ENCODE measurements at regions of chr12 and their contacts with region 1.

Region 1: GRCh38 chr12:98644711-98645402 is at the starts of genes APAF1 and IKBIP:
- DNase-seq: peak; percentile 99
- ATAC-seq: peak; percentile 87
- H3K4me3 Mint-ChIP-seq: peak within 1 kb of the TSS; percentile 97
- H3K27ac Mint-ChIP-seq: peak within 1 kb of the TSS; percentile 95
- H3K4me1 Mint-ChIP-seq: peaks cover 19% of the 10 kb centered on the region
- H3K27me3 Mint-ChIP-seq: no peaks in the 10 kb centered on the region
- CTCF ChIP-seq: no peak
- total RNA-seq, gene APAF1: 21.7 and 24.0 TPM in 2 replicates
- total RNA-seq, gene IKBIP: 8.9 and 9.1 TPM in 2 replicates

Region 2: GRCh38 chr12:96906849-96907670 is 1737.8 kb before region 1 on chr12 and contains the start of gene NEDD1:
- CTCF ChIA-PET with region 1: no interaction called
- POLR2A ChIA-PET with region 1: no interaction called
- intact Hi-C with region 1: loop called (anchors 2 kb)
- DNase-seq: peak; percentile 85
- ATAC-seq: peak; percentile 85
- H3K4me3 Mint-ChIP-seq: peak within 1 kb of the TSS; percentile 95
- H3K27ac Mint-ChIP-seq: peak within 1 kb of the TSS; percentile 91
- H3K4me1 Mint-ChIP-seq: peaks cover 41% of the 10 kb centered on the region
- H3K27me3 Mint-ChIP-seq: peaks cover 2% of the 10 kb centered on the region
- CTCF ChIP-seq: no peak
- total RNA-seq, gene NEDD1: 15.0 and 16.3 TPM in 2 replicates

Region 3: GRCh38 chr12:98516184-98516873 is 128.5 kb before region 1 on chr12:
- CTCF ChIA-PET with region 1: interaction called, 3 read pairs
- POLR2A ChIA-PET with region 1: interaction called, 29 read pairs
- intact Hi-C with region 1: loop called (anchors 1 kb)
- DNase-seq: peak; percentile 71
- ATAC-seq: peak; percentile 63
- H3K4me3 Mint-ChIP-seq: peak overlapping the region; percentile 98
- H3K27ac Mint-ChIP-seq: peak overlapping the region; percentile 97
- H3K4me1 Mint-ChIP-seq: peaks cover 61% of the 10 kb centered on the region
- H3K27me3 Mint-ChIP-seq: no peaks in the 10 kb centered on the region
- CTCF ChIP-seq: no peak

Region 4: DNA sequence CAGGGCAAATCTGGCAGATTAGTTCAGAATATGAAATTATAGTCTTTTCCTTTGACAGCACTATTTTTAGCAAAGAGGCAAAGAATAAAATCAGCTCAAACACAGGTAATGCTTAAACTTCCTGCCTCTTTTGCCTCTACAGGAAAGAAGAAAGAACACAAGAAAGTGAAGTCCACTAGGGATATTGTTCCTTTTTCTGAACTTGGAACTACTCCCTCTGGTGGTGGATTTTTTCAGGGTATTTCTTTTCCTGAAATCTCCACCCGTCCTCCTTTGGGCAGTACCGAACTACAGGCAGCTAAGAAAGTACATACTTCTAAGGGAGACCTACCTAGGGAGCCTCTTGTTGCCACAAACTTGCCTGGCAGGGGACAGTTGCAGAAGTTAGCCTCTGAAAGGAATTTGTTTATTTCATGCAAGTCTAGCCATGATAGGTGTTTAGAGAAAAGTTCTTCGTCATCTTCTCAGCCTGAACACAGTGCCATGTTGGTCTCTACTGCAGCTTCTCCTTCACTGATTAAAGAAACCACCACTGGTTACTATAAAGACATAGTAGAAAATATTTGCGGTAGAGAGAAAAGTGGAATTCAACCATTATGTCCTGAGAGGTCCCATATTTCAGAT is 112.1 kb before region 1 on chr12:
- CTCF ChIA-PET with region 1: no interaction called
- POLR2A ChIA-PET with region 1: no interaction called
- intact Hi-C with region 1: no loop called
- DNase-seq: no peak
- ATAC-seq: peak; percentile 37
- H3K4me3 Mint-ChIP-seq: no peak overlapping the region
- H3K27ac Mint-ChIP-seq: no peak overlapping the region
- H3K4me1 Mint-ChIP-seq: peaks cover under 1% of the 10 kb centered on the region
- H3K27me3 Mint-ChIP-seq: no peaks in the 10 kb centered on the region
- CTCF ChIP-seq: no peak

Region 5: DNA sequence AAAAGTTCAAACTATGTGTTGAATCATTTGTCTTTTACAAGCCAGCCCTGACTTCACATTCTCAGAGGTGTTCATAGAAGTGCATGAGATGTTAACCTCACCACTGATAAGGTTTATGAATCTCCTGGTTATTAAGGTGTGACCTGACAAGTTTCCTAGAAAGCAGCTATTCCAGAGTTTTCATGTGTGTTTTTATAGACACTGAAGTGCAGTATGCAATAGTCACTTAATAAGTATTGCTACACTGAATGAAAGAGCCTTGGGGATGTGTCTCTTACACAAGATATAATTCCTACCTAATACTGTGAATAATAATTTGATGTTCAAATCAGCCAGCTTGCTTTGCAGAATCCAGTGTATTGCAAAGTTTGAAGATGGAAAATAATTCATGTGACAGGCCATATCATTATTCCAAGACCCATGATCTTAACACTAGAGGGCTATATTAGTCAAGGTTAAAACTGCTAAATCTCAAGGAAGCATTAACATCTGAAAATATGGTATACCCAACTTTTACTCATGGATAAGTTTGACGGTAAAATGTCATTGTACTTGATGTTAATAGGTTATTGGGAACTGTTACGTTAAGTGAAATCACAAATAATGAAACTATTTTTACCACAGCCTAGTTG is 38.4 kb before region 1 on chr12:
- CTCF ChIA-PET with region 1: interaction called, 4 read pairs
- POLR2A ChIA-PET with region 1: interaction called, 15 read pairs
- intact Hi-C with region 1: loop called (anchors 1 kb)
- DNase-seq: no peak
- ATAC-seq: no peak
- H3K4me3 Mint-ChIP-seq: no peak overlapping the region
- H3K27ac Mint-ChIP-seq: no peak overlapping the region
- H3K4me1 Mint-ChIP-seq: peaks cover 7% of the 10 kb centered on the region
- H3K27me3 Mint-ChIP-seq: no peaks in the 10 kb centered on the region
- CTCF ChIP-seq: no peak

Region 6: DNA sequence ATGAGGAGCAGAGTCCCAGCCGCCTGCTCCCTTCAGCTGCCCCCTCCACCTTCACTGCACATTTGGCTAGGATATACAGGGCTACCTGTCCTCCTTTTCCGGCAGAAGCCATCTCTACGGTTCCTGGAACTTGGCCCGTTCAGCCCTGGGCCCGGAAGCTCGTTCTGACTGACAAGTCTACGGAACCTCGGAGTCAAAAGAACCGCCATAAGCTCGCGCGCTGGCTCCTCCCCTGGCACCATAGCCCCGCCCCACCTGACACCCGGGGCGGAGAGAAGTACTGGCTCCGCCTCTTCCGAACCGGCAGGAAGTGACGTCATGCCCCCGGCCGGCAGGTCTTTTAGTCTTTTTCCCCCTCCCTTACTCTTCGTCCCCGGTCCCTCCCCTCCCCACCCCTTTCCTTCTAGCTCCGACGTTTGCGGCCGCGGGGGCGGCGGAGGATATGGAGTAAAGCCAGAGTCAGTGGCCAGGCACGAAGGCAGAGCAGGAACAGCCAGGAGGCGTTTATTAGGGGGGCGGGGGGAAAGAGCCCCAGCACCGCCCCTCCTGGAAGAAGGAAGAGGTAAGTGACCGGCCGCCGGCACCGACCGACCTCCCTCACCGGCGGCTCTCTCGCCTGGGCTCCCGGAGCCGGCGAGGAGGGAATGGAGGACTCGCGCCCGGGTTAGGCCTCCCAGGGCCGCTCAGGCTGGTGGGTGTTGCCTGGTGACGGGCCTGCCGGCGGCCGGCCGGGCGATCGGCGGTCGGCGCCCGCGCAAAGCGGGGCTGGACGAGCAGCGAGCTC is 1622.2 kb after region 1 on chr12 and contains the starts of genes DEPDC4 and SCYL2:
- CTCF ChIA-PET with region 1: no interaction called
- POLR2A ChIA-PET with region 1: no interaction called
- intact Hi-C with region 1: loop called (anchors 10 kb)
- DNase-seq: peak; percentile 90
- ATAC-seq: peak; percentile 93
- H3K4me3 Mint-ChIP-seq: peak within 1 kb of the TSS; percentile 99
- H3K27ac Mint-ChIP-seq: peak within 1 kb of the TSS; percentile 95
- H3K4me1 Mint-ChIP-seq: peaks cover 34% of the 10 kb centered on the region
- H3K27me3 Mint-ChIP-seq: no peaks in the 10 kb centered on the region
- CTCF ChIP-seq: no peak
- total RNA-seq, gene DEPDC4: 0.49 and 0.81 TPM in 2 replicates
- total RNA-seq, gene SCYL2: 34.7 and 38.7 TPM in 2 replicates